Left cardiac atrium (tissue), 4 donors: ENCODE measurements at regions of chr2 and their contacts with region 1.

Region 1: GRCh38 chr2:105235388-105236054 is 6.0 kb upstream of the GPR45 start:
- DNase-seq: peak; percentile 82
- ATAC-seq: peak; percentile 69 to 70

Region 2: GRCh38 chr2:105114551-105114950 is 121.0 kb before region 1 on chr2:
- intact Hi-C with region 1: loop called (anchors 2 kb)
- DNase-seq: no peak
- ATAC-seq: peak in 1 of 2 donors; percentile 45

Region 3: DNA sequence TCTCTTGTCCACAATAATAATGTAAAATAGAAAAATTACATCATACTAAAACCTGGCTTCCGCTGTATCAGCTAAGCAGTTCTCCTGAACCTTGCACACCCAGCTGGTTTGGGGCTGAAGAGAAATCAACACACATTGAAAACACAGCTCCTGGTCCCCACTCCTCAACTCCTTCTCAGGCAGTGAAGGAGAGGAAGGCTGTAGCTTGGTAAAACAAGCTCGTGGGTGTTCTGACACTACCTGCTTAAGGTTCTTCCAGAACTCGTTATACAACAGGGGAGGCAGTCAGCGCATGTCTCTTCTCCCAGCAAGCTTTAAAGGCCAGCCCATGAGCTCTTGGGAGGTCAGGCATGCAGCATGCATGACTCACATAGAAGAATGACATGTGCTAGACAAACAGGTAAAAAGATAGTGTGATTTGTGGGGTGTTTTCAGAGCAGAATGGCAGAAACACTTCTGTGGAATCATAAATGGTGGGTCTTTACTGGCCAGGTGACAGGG is 889.4 kb after region 1 on chr2:
- intact Hi-C with region 1: no loop called
- DNase-seq: no peak
- ATAC-seq: no peak